PC-3 (cell line): ENCODE measurements at regions of chr3 and their contacts with region 1.

Region 1: DNA sequence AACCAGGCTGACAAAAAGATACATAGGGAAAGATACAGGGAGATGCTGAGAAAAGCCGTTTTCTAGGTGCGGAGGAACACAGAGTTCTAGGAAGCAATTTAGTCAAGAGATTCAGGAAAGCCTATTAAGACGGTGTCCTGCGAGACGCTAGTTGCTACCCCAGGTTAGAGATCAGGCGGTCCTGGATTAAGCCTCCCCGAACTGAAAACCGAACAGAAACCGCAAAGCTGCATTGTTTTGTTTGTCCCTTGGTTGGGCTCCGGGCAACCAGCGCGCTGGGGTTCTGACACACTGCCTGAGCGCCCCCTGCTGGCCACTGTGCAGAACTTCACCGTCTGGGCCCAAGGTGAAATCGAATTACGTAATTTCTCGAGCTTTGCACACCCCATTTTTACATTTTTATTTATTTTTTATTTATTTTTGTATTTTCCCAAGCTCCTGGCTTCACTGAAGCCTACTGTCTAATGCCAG is 37.3 kb upstream of the NDUFB4 start:
- DNase-seq: peak; percentile 95
- ATAC-seq: peak; percentile 60
- H3K4me3 ChIP-seq: peak overlapping the region; percentile 74
- H3K27ac ChIP-seq: peak overlapping the region; percentile 64
- H3K4me1 ChIP-seq: peaks cover 33% of the 10 kb centered on the region
- H3K27me3 ChIP-seq: no peaks in the 10 kb centered on the region
- CTCF ChIP-seq: peak; percentile 94

Region 2: DNA sequence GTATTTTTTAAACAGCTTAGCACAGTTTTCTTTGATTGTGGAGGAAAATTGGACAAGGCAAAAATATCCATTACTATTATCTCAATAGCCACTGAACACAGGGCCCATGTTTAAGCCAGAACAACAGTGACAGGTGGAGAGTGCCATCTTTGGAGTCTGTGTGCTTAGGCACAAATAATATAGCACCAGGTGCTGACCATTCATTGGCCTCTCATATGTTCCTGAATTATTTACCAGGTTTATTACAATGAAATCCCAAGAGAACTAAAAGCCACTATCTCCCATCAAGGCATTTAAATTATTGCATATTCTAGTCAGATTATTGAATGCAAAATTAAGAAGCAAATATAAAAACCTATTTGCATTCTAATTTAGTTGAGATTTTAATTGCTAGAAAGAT is 313.4 kb before region 1 on chr3:
- CTCF ChIA-PET with region 1: no interaction called
- POLR2A ChIA-PET with region 1: interaction called, 13 read pairs
- intact Hi-C with region 1: loop called (anchors 1 kb)
- DNase-seq: no peak
- ATAC-seq: no peak
- H3K4me3 ChIP-seq: no peak overlapping the region
- H3K27ac ChIP-seq: no peak overlapping the region
- H3K4me1 ChIP-seq: no peaks in the 10 kb centered on the region
- H3K27me3 ChIP-seq: no peaks in the 10 kb centered on the region
- CTCF ChIP-seq: no peak

Region 3: DNA sequence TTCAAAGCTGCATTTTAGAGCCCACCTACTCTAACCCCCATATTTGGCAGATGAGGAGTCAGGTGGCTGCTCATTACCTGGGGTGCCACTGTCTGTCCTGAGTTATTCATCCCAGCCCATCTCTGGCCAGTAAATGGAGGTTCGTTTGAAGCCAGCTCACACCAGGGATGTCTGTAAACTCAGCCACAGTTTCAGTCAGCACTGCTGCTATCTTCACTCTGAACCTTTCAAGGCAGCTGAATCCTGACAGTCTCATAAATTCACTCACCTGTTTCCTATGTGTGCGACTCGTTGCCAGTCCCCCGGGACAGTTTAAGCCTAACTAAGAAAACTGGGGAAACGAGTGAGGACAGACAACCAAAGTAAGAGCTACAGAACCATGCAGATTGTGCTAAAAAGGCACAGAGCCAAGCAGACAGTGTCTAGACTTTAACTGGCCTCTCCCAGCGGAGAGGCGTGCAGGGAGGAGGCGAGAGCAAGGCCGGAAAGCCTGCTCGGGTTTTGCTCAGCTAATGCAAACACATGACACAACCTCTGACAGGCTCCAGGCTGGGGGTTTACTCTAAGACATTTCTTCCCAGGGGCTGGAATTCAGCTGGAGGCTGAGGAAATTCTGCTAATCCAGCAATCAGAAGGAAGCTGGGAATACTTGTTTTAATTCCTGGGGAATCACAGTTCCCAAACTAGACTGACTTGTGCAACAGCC is 120.0 kb before region 1 on chr3:
- CTCF ChIA-PET with region 1: interaction called, 7 read pairs
- POLR2A ChIA-PET with region 1: interaction called, 4 read pairs
- intact Hi-C with region 1: loop called (anchors 5 kb)
- DNase-seq: peak; percentile 89
- ATAC-seq: peak; percentile 77
- H3K4me3 ChIP-seq: peak overlapping the region; percentile 8; the same call in 1 of the 2 replicates
- H3K27ac ChIP-seq: peak overlapping the region; percentile 74
- H3K4me1 ChIP-seq: peaks cover 79% of the 10 kb centered on the region
- H3K27me3 ChIP-seq: no peaks in the 10 kb centered on the region
- CTCF ChIP-seq: no peak

Region 4: GRCh38 chr3:120506828-120507774 is 51.7 kb before region 1 on chr3:
- CTCF ChIA-PET with region 1: interaction called, 8 read pairs
- POLR2A ChIA-PET with region 1: no interaction called
- intact Hi-C with region 1: loop called (anchors 1 kb)
- DNase-seq: peak; percentile 84
- ATAC-seq: peak; percentile 88
- H3K4me3 ChIP-seq: peak overlapping the region; percentile 33; the same call in 1 of the 2 replicates
- H3K27ac ChIP-seq: peak overlapping the region; percentile 72
- H3K4me1 ChIP-seq: peaks cover 22% of the 10 kb centered on the region
- H3K27me3 ChIP-seq: no peaks in the 10 kb centered on the region
- CTCF ChIP-seq: peak; percentile 94

Region 5: GRCh38 chr3:120795017-120795648 is 236.3 kb after region 1 on chr3:
- CTCF ChIA-PET with region 1: interaction called, 13 read pairs
- POLR2A ChIA-PET with region 1: no interaction called
- intact Hi-C with region 1: loop called (anchors 1 kb)
- DNase-seq: peak; percentile 93
- ATAC-seq: peak; percentile 65
- H3K4me3 ChIP-seq: no peak overlapping the region
- H3K27ac ChIP-seq: 0 out of 2 replicates have a peak overlapping the region, but pooled peaks have one; percentile 3
- H3K4me1 ChIP-seq: peaks cover 28% of the 10 kb centered on the region
- H3K27me3 ChIP-seq: no peaks in the 10 kb centered on the region
- CTCF ChIP-seq: peak; percentile 99

Region 6: GRCh38 chr3:121243208-121243607 is 684.4 kb after region 1 on chr3:
- CTCF ChIA-PET with region 1: no interaction called
- POLR2A ChIA-PET with region 1: no interaction called
- intact Hi-C with region 1: loop called (anchors 10 kb)
- DNase-seq: peak; percentile 45
- ATAC-seq: peak; percentile 84
- H3K4me3 ChIP-seq: no peak overlapping the region
- H3K27ac ChIP-seq: no peak overlapping the region
- H3K4me1 ChIP-seq: peaks cover 10% of the 10 kb centered on the region
- H3K27me3 ChIP-seq: no peaks in the 10 kb centered on the region
- CTCF ChIP-seq: no peak